ENCODE measurements at regions of chr14 and their contacts with region 1.

Region 1: GRCh38 chr14:101559624-101560533 is 1.4 kb upstream of the DIO3 start:
- DNase-seq: no peak
- ATAC-seq: peak; percentile 84

Region 2: GRCh38 chr14:101315802-101316296 is 244.0 kb before region 1 on chr14:
- intact Hi-C with region 1: no loop called
- DNase-seq: no peak
- ATAC-seq: no peak

Region 3: GRCh38 chr14:101495827-101496775 is 63.8 kb before region 1 on chr14:
- intact Hi-C with region 1: loop called (anchors 5 kb)
- DNase-seq: peak; percentile 45
- ATAC-seq: no peak

Region 4: GRCh38 chr14:101876555-101876938 is 316.7 kb after region 1 on chr14:
- intact Hi-C with region 1: no loop called
- DNase-seq: peak; percentile 88
- ATAC-seq: peak; percentile 85

Measured in Right ventricle myocardium inferior (tissue), 1 donor.